ENCODE measurements at regions of chr4 and their contacts with region 1.

Region 1: DNA sequence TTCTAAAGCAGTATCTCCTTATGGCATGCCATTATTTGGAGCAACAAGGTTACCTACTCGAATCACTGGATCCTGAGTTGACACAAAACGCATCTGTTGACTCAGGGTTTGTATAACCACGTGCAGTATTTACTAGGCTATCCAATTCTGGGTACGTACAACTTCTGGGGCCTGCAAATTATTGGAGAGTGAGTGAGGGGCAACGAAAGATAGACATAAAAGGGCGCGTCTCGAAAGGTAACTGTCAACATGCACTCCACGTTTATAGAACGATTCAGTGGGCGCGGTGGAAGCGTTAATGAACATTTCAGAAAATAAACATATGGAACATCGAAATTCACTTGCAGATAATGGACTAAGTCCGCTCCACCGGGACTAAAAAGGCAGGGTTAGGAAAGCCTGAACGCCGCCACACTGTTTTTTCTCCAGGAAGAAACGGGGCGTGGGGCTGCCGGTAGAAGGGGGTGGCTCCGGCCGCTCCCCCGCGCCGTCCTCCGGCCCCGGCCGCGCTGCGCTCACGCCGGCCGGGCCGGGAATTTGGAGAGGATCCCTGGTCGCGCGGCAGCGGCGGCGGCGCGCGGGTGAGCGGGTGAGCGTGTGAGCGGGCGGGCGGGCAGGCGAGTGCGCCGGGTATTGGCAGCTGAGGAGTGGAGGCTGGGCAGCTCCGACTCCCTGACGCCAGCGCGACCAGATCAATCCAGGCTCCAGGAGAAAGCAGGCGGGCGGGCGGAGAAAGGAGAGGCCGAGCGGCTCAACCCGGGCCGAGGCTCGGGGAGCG is at the start of gene SMAD1:
- DNase-seq: peak; percentile 90
- ATAC-seq: peak; percentile 95
- total RNA-seq, gene SMAD1: 12.0 TPM

Region 2: DNA sequence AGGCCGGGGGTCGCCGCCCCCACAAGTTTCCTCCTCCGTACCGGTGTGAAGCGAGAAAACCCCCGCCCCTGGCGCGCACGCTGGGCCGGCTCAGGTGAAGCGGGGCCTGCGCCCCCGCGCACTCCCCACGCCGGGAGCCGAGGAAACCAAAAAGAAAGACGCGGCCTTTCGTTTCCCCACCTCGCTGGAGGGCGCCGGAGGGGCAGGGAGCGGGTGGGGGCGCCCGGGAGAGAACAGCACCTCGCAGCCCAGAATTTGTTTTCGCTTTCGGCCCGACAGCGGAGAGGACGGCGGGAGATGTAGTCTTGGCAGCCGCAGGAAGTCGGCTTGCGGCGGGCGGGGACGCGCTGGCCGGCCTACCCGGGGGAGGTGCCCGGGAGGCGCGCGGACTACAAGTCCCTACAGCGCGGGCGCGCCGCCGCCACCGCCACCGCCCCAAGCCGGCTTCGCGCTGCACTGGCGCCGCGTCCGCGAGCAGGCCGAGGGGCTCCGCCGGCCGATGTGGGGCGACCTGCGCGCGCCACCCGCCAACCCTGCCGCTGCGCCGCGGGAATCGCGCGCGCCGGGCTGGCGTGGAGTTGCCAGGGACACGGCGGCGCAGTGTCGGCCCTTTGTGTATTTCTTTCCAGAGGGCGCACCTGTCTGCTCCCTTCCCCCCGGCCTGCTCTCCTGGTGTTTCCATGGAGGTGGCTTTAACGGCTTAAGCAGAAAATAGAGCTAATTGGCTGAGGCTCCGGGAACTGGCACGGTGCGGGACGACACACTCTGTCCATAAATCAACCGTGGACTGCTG is 300.9 kb before region 1 on chr4 and contains the start of gene OTUD4:
- intact Hi-C with region 1: loop called (anchors 10 kb)
- DNase-seq: peak; percentile 98
- ATAC-seq: peak; percentile 98
- total RNA-seq, gene OTUD4: 34.5 TPM

Region 3: GRCh38 chr4:145216535-145216934 is 264.8 kb before region 1 on chr4:
- intact Hi-C with region 1: no loop called
- DNase-seq: no peak
- ATAC-seq: no peak

Region 4: DNA sequence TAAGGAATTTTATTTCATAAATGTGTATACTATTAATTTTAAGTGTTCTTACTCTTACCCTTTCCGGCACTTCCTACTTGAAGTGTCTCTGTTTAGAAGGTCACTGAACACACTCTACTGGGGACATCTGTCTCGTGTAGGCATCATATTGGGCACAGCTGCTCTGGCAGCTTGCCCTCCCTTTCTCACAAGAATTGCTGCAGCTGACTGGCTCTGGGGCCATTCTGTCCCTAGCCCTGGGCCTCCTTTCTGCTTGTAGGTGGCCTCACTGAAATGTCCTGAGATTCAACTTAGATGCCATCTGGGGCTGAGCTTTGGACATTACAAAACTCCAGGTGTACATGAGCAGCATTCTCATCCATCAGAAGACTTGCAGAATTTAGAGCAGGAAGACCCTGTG is 49.9 kb after region 1 on chr4:
- intact Hi-C with region 1: loop called (anchors 5 kb)
- DNase-seq: no peak
- ATAC-seq: peak; percentile 56

Region 5: GRCh38 chr4:145545538-145546174 is 64.3 kb after region 1 on chr4:
- intact Hi-C with region 1: loop called (anchors 5 kb)
- DNase-seq: no peak
- ATAC-seq: peak; percentile 64

Region 6: DNA sequence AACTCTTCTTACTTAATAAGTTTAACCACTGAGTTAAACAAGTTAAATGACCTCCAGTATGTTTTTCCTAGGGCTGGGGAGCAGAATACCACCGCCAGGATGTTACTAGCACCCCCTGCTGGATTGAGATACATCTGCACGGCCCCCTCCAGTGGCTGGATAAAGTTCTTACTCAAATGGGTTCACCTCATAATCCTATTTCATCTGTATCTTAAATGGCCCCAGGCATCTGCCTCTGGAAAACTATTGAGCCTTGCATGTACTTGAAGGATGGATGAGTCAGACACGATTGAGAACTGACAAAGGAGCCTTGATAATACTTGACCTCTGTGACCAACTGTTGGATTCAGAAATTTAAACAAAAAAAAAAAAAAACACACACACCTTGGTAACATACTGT is 76.4 kb after region 1 on chr4:
- intact Hi-C with region 1: loop called (anchors 2 kb)
- DNase-seq: peak; percentile 63
- ATAC-seq: peak; percentile 81

Measured in Right ventricle myocardium inferior (tissue), 1 donor.